Activated CD4-positive, alpha-beta T cell treated with anti-CD3 and anti-CD28 coated beads for 36 hours (primary cell): ENCODE measurements at regions of chr15 and their contacts with region 1.

Region 1: GRCh38 chr15:40893733-40894688 is at the start of gene VPS18:
- DNase-seq: peak; percentile 100
- ATAC-seq: peak; percentile 99
- H3K4me3 Mint-ChIP-seq: peak within 1 kb of the TSS; percentile 88
- H3K27ac Mint-ChIP-seq: peak within 1 kb of the TSS; percentile 86
- H3K4me1 Mint-ChIP-seq: peaks cover 29% of the 10 kb centered on the region
- H3K27me3 Mint-ChIP-seq: no peaks in the 10 kb centered on the region
- total RNA-seq, gene VPS18: 6.2 TPM

Region 2: GRCh38 chr15:40593588-40594428 is 300.2 kb before region 1 on chr15 and contains the start of gene KNL1:
- CTCF ChIA-PET with region 1: interaction called, 5 read pairs
- POLR2A ChIA-PET with region 1: no interaction called
- intact Hi-C with region 1: loop called in 1 of 2 experiments (anchors 1 kb)
- DNase-seq: peak; percentile 94
- ATAC-seq: peak; percentile 86
- H3K4me3 Mint-ChIP-seq: peak within 1 kb of the TSS; percentile 87
- H3K27ac Mint-ChIP-seq: peak within 1 kb of the TSS; percentile 95
- H3K4me1 Mint-ChIP-seq: peaks cover 24% of the 10 kb centered on the region
- H3K27me3 Mint-ChIP-seq: peaks cover 6% of the 10 kb centered on the region
- total RNA-seq, gene KNL1: 26.2 to 33.5 TPM

Region 3: DNA sequence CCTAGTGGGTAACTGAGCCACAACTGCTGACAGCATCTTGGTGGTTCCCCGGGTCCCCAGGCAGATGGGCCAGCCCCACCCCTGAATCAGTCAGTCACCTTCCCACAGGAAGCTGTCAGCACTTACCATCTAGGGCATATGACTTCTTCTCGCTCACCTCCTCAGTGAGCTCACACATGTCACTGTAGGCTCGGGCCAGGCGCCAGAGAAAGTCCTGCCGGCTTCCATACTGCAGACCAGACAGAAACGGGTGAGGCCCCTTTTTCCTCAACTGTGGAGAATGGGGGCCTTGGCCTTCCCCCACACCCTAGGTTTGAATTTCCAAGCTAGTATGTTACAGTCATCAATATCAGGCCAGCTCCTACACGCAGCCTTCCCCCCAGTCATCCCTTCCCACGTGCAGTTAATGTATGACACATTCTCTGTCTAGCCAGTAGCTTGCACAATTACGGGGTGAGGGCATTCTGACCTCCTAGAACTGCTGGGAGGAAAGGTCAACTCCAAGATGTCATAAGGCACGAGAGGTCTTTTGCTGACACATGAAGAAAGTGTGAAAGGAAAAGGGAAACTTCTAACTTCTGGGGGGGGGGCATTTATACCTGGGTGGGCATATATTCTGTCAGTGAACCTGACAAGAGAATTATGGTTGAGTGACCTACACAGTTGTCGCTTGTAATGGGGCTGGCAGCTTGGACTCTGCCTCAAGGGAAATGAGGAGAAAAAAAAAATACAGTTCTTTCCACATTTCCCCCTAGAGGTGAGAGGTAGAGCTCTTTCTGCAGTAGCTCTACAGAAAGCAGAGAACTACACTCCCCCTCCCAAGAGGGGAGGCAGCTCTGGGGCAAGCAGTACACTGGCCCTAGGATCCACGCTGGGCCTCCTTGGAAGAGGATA is 149.8 kb before region 1 on chr15:
- CTCF ChIA-PET with region 1: interaction called, 6 read pairs
- POLR2A ChIA-PET with region 1: no interaction called
- intact Hi-C with region 1: loop called in 1 of 2 experiments (anchors 10 kb)
- DNase-seq: peak; percentile 82
- ATAC-seq: peak; percentile 93
- H3K4me3 Mint-ChIP-seq: peak overlapping the region; percentile 4
- H3K27ac Mint-ChIP-seq: peak overlapping the region; percentile 71
- H3K4me1 Mint-ChIP-seq: peaks cover 25% of the 10 kb centered on the region
- H3K27me3 Mint-ChIP-seq: no peaks in the 10 kb centered on the region

Region 4: GRCh38 chr15:40847205-40847961 is 46.6 kb before region 1 on chr15:
- CTCF ChIA-PET with region 1: interaction called, 13 read pairs
- POLR2A ChIA-PET with region 1: interaction called, 6 read pairs
- intact Hi-C with region 1: loop called in 1 of 2 experiments (anchors 1 kb)
- DNase-seq: no peak
- ATAC-seq: no peak
- H3K4me3 Mint-ChIP-seq: no peak overlapping the region
- H3K27ac Mint-ChIP-seq: no peak overlapping the region
- H3K4me1 Mint-ChIP-seq: peaks cover 26% of the 10 kb centered on the region
- H3K27me3 Mint-ChIP-seq: peaks cover 6% of the 10 kb centered on the region

Region 5: GRCh38 chr15:40879604-40880003 is 14.4 kb before region 1 on chr15:
- CTCF ChIA-PET with region 1: interaction called, 15 read pairs
- POLR2A ChIA-PET with region 1: no interaction called
- intact Hi-C with region 1: loop called in 1 of 2 experiments (anchors 1 kb)
- DNase-seq: no peak
- ATAC-seq: no peak
- H3K4me3 Mint-ChIP-seq: no peak overlapping the region
- H3K27ac Mint-ChIP-seq: no peak overlapping the region
- H3K4me1 Mint-ChIP-seq: peaks cover 14% of the 10 kb centered on the region
- H3K27me3 Mint-ChIP-seq: peaks cover under 1% of the 10 kb centered on the region

Region 6: DNA sequence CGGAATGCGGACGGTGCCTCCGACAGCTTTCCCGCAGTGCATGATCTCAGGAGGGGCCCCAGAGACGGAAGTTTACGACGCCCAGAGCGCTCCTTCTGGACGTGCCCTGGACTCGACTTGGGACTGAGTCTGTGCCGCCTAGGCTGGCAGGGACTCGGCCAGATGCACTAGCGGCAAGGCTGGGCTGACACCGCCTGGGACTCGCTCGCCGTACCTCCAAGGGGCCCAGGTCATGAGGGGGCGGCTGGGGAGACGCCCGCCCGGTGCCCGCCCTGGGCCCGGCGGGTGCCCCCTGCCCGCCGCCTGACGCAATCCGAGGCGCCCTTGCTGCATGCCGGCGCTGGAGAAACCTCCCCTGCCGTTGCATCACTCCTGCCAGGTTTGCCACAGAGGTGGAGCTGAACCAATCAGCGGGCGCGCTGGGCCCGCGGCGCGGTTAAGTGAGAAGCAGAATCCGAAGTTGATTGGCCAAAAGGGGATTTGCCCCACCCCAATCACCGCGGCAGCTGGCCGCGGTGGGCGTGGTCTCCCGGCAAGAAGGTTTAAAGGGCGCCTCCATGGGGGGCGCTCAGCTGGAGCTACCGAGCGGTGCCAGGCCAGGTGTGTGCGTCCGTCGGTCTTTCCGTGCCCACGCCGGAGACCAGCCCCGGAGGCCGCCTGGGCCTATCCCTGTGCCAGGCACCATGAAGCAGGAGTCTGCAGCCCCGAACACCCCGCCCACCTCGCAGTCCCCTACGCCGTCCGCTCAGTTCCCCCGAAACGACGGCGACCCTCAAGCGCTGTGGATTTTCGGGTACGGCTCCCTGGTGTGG is 59.1 kb after region 1 on chr15 and contains the start of gene CHAC1:
- CTCF ChIA-PET with region 1: interaction called, 12 read pairs
- POLR2A ChIA-PET with region 1: no interaction called
- intact Hi-C with region 1: loop called in 1 of 2 experiments (anchors 1 kb)
- DNase-seq: peak; percentile 99
- ATAC-seq: peak; percentile 92
- H3K4me3 Mint-ChIP-seq: peak within 1 kb of the TSS; percentile 93
- H3K27ac Mint-ChIP-seq: peak within 1 kb of the TSS; percentile 97
- H3K4me1 Mint-ChIP-seq: peaks cover 25% of the 10 kb centered on the region
- H3K27me3 Mint-ChIP-seq: peaks cover 2% of the 10 kb centered on the region
- total RNA-seq, gene CHAC1: 31.1 to 32.2 TPM